Activated CD4-positive, alpha-beta T cell treated with anti-CD3 and anti-CD28 coated beads for 36 hours (primary cell): ENCODE measurements at regions of chr2 and their contacts with region 1.

Region 1: GRCh38 chr2:48144777-48145176 is 238.5 kb upstream of the FBXO11 start:
- DNase-seq: no peak
- ATAC-seq: peak; percentile 24
- H3K4me3 Mint-ChIP-seq: no peak overlapping the region
- H3K27ac Mint-ChIP-seq: peak overlapping the region; percentile 9
- H3K4me1 Mint-ChIP-seq: peaks cover 23% of the 10 kb centered on the region
- H3K27me3 Mint-ChIP-seq: no peaks in the 10 kb centered on the region

Region 2: GRCh38 chr2:48114256-48114655 is 30.5 kb before region 1 on chr2:
- CTCF ChIA-PET with region 1: no interaction called
- POLR2A ChIA-PET with region 1: no interaction called
- intact Hi-C with region 1: loop called in 1 of 2 experiments (anchors 2 kb)
- DNase-seq: peak; percentile 83
- ATAC-seq: peak; percentile 81
- H3K4me3 Mint-ChIP-seq: no peak overlapping the region
- H3K27ac Mint-ChIP-seq: peak overlapping the region; percentile 37
- H3K4me1 Mint-ChIP-seq: peaks cover 24% of the 10 kb centered on the region
- H3K27me3 Mint-ChIP-seq: no peaks in the 10 kb centered on the region

Region 3: GRCh38 chr2:48126162-48126561 is 18.6 kb before region 1 on chr2:
- CTCF ChIA-PET with region 1: no interaction called
- POLR2A ChIA-PET with region 1: no interaction called
- intact Hi-C with region 1: no loop called
- DNase-seq: no peak
- ATAC-seq: no peak
- H3K4me3 Mint-ChIP-seq: no peak overlapping the region
- H3K27ac Mint-ChIP-seq: no peak overlapping the region
- H3K4me1 Mint-ChIP-seq: peaks cover 10% of the 10 kb centered on the region
- H3K27me3 Mint-ChIP-seq: no peaks in the 10 kb centered on the region

Region 4: GRCh38 chr2:48228345-48228684 is 83.5 kb after region 1 on chr2:
- CTCF ChIA-PET with region 1: no interaction called
- POLR2A ChIA-PET with region 1: no interaction called
- intact Hi-C with region 1: no loop called
- DNase-seq: no peak
- ATAC-seq: no peak
- H3K4me3 Mint-ChIP-seq: no peak overlapping the region
- H3K27ac Mint-ChIP-seq: no peak overlapping the region
- H3K4me1 Mint-ChIP-seq: peaks cover 8% of the 10 kb centered on the region
- H3K27me3 Mint-ChIP-seq: no peaks in the 10 kb centered on the region